T-cell (primary cell): ENCODE measurements at regions of chr1 and their contacts with region 1.

Region 1: GRCh38 chr1:101288491-101288944 is 51.7 kb downstream of the S1PR1 start:
- DNase-seq: peak in 34 of 35 experiments; percentile 29 to 90 (median 62)
- ATAC-seq: peak; percentile 62 to 68 (median 64)
- H3K4me3 ChIP-seq: no peak overlapping the region
- H3K4me3 Mint-ChIP-seq: peak overlapping the region in 2 of 3 donors; percentile 4 to 24
- H3K27ac ChIP-seq: peak overlapping the region; percentile 35
- H3K27ac Mint-ChIP-seq: peak overlapping the region; percentile 79 to 85
- H3K4me1 ChIP-seq: peaks cover 70 to 75% of the 10 kb centered on the region in 2 experiments
- H3K4me1 Mint-ChIP-seq: peaks cover 76 to 89% (median 84%) of the 10 kb centered on the region in 3 donors
- H3K27me3 ChIP-seq: no peaks in the 10 kb centered on the region
- H3K27me3 Mint-ChIP-seq: no peaks in the 10 kb centered on the region

Region 2: GRCh38 chr1:100921109-100921706 is 367.3 kb before region 1 on chr1:
- CTCF ChIA-PET with region 1: interaction called, 14 to 92 read pairs
- POLR2A ChIA-PET with region 1: interaction called, 3 to 5 read pairs
- DNase-seq: peak in 2 of 35 experiments; percentile 17 to 81
- ATAC-seq: no peak
- H3K4me3 ChIP-seq: no peak overlapping the region
- H3K4me3 Mint-ChIP-seq: no peak overlapping the region
- H3K27ac ChIP-seq: no peak overlapping the region
- H3K27ac Mint-ChIP-seq: peak overlapping the region; percentile 81 to 86
- H3K4me1 ChIP-seq: peaks cover 19 to 37% of the 10 kb centered on the region in 2 experiments
- H3K4me1 Mint-ChIP-seq: peaks cover 29 to 38% (median 37%) of the 10 kb centered on the region in 3 donors
- H3K27me3 ChIP-seq: no peaks in the 10 kb centered on the region
- H3K27me3 Mint-ChIP-seq: no peaks in the 10 kb centered on the region

Region 3: DNA sequence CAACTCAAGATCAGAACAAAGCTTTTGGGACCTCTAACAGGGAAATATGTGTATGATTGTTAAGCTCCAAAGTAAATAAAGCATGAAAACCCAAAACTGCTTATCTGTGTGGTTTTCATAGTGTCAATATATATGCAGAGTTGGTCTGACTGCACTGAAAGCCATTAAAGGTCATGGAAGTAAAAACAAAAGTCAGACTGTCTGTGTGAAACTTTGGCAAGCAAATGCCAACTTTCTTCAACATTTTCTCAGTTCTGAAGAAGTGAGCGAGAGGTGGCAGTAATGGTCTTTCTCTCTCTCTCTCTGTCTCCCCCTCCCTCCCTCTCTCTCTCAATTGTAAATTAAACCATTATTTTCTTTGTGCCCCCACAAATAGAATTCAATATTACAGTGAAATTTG is 151.8 kb before region 1 on chr1:
- CTCF ChIA-PET with region 1: interaction called, 12 read pairs
- POLR2A ChIA-PET with region 1: interaction called, 3 to 4 read pairs
- DNase-seq: peak in 7 of 35 experiments; percentile 6 to 72 (median 13)
- ATAC-seq: peak; percentile 69 to 83 (median 74)
- H3K4me3 ChIP-seq: no peak overlapping the region
- H3K4me3 Mint-ChIP-seq: peak overlapping the region in 2 of 3 donors; percentile 44 to 47
- H3K27ac ChIP-seq: peak overlapping the region; percentile 43
- H3K27ac Mint-ChIP-seq: peak overlapping the region; percentile 87 to 88
- H3K4me1 ChIP-seq: peaks cover 16 to 38% of the 10 kb centered on the region in 2 experiments
- H3K4me1 Mint-ChIP-seq: peaks cover 59 to 66% (median 64%) of the 10 kb centered on the region in 3 donors
- H3K27me3 ChIP-seq: no peaks in the 10 kb centered on the region
- H3K27me3 Mint-ChIP-seq: no peaks in the 10 kb centered on the region

Region 4: GRCh38 chr1:101190441-101190840 is 98.1 kb before region 1 on chr1:
- CTCF ChIA-PET with region 1: no interaction called
- POLR2A ChIA-PET with region 1: no interaction called
- DNase-seq: no peak
- ATAC-seq: no peak
- H3K4me3 ChIP-seq: no peak overlapping the region
- H3K4me3 Mint-ChIP-seq: no peak overlapping the region
- H3K27ac ChIP-seq: no peak overlapping the region
- H3K27ac Mint-ChIP-seq: no peak overlapping the region
- H3K4me1 ChIP-seq: peaks cover 0 to 2% of the 10 kb centered on the region in 2 experiments
- H3K4me1 Mint-ChIP-seq: peaks cover 10 to 14% (median 11%) of the 10 kb centered on the region in 3 donors
- H3K27me3 ChIP-seq: no peaks in the 10 kb centered on the region
- H3K27me3 Mint-ChIP-seq: no peaks in the 10 kb centered on the region

Region 5: DNA sequence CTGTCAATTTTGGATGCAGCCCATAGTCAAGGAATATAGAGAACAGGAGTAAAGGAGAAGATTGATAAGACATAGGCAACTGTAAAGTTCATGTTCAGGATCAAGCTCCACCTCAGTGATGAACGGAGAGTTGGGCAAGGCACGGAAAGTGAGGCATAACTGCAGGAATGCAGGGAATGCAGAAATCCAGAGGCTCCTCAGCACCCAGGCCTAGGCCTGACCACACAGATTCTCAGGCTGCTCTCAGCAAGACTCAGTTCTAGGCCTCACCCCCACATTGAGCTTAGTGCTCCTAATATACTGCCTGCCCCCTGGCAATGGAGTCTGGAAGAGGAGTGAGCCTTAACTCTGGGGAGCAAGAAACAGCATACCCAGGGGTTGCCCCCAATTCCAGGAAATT is 88.0 kb before region 1 on chr1:
- CTCF ChIA-PET with region 1: no interaction called
- POLR2A ChIA-PET with region 1: no interaction called
- DNase-seq: no peak
- ATAC-seq: no peak
- H3K4me3 ChIP-seq: no peak overlapping the region
- H3K4me3 Mint-ChIP-seq: no peak overlapping the region
- H3K27ac ChIP-seq: no peak overlapping the region
- H3K27ac Mint-ChIP-seq: no peak overlapping the region
- H3K4me1 ChIP-seq: no peaks in the 10 kb centered on the region
- H3K4me1 Mint-ChIP-seq: peaks cover 0 to 5% (median 3%) of the 10 kb centered on the region in 3 donors
- H3K27me3 ChIP-seq: no peaks in the 10 kb centered on the region
- H3K27me3 Mint-ChIP-seq: no peaks in the 10 kb centered on the region

Region 6: DNA sequence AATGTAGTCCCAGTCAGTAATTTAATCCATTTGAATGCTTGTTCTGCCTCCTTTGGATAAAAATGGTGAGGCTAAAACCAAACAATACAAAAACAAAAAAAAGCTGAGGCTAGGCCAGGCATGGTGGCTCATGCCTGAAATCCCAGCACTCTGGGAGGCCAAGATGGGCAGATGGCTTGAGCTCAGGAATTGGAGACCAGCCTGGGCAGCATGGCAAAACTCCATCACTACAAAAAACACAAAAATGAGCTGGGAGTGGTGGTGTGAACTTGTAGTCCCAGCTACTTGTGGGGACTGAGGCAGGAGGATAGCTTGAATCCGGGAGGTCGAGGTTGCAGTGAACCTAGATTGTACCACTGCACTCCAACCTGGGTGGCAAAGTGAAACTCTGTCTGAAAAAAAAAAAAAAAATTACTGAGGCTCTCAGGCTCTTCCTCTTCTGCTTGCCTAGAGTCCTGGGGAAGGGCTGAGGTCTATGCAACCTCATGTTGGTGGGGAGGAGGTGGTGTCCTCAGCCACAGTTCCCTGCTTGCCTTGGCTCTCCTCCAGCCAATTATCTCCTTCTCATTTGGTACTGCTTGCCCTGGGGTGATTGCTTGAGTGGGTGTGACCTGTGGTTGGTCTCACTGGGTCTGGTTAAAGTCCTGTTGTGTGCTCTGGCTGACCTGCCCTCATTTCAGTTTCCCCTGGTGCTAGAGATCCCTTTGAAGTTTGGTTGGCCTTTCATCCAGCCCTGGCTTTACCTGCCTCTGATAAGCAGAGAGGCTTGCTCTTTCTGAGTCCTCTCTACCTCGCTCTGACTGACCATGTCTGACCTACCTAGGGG is 30.8 kb before region 1 on chr1:
- CTCF ChIA-PET with region 1: interaction called, 3 to 8 read pairs
- POLR2A ChIA-PET with region 1: interaction called, 5 to 10 read pairs
- DNase-seq: peak in 25 of 35 experiments; percentile 12 to 65 (median 38)
- ATAC-seq: peak; percentile 69 to 74 (median 72)
- H3K4me3 ChIP-seq: no peak overlapping the region
- H3K4me3 Mint-ChIP-seq: peak overlapping the region in 2 of 3 donors; percentile 17 to 38
- H3K27ac ChIP-seq: peak overlapping the region; percentile 58
- H3K27ac Mint-ChIP-seq: peak overlapping the region; percentile 79 to 93
- H3K4me1 ChIP-seq: peaks cover 32 to 43% of the 10 kb centered on the region in 2 experiments
- H3K4me1 Mint-ChIP-seq: peaks cover 58 to 68% (median 63%) of the 10 kb centered on the region in 3 donors
- H3K27me3 ChIP-seq: no peaks in the 10 kb centered on the region
- H3K27me3 Mint-ChIP-seq: no peaks in the 10 kb centered on the region

Region 7: DNA sequence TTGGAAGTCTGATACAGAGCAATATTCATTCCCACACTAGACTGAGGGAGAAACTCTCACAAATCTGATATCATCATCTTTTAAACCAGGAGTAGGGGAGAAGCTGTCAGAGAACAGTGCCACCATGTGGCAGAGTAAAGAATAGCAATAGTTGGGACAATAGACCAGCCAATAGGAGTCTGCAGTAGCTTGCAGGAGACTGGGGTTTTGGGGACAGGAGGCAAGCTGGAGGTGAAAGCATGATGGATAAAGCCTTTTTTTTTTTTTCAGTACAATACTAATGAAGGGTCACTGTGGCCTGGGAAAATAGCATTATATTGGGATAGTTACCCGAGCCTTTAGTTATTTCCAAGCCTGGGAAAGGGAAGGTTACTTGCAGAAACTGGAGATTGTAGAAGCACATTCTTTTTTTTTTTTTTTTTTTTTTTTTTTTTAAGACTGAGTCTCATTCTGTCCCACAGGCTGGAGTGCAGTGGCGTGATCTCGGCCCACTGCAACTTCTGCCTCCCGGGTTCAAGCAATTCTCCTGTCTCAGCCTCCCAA is 69.0 kb after region 1 on chr1:
- CTCF ChIA-PET with region 1: interaction called, 5 to 16 read pairs
- POLR2A ChIA-PET with region 1: no interaction called
- DNase-seq: peak; percentile 17 to 93 (median 61)
- ATAC-seq: peak; percentile 98 to 100 (median 99)
- H3K4me3 ChIP-seq: no peak overlapping the region
- H3K4me3 Mint-ChIP-seq: peak overlapping the region in 2 of 3 donors; percentile 42 to 53
- H3K27ac ChIP-seq: no peak overlapping the region
- H3K27ac Mint-ChIP-seq: peak overlapping the region; percentile 5 to 85
- H3K4me1 ChIP-seq: peaks cover 4 to 6% of the 10 kb centered on the region in 2 experiments
- H3K4me1 Mint-ChIP-seq: peaks cover 8 to 13% (median 10%) of the 10 kb centered on the region in 3 donors
- H3K27me3 ChIP-seq: no peaks in the 10 kb centered on the region
- H3K27me3 Mint-ChIP-seq: no peaks in the 10 kb centered on the region

Region 8: GRCh38 chr1:103197216-103197615 is 1908.7 kb after region 1 on chr1:
- CTCF ChIA-PET with region 1: no interaction called
- POLR2A ChIA-PET with region 1: no interaction called
- DNase-seq: no peak
- ATAC-seq: no peak
- H3K4me3 ChIP-seq: no peak overlapping the region
- H3K4me3 Mint-ChIP-seq: no peak overlapping the region
- H3K27ac ChIP-seq: no peak overlapping the region
- H3K27ac Mint-ChIP-seq: no peak overlapping the region
- H3K4me1 ChIP-seq: no peaks in the 10 kb centered on the region
- H3K4me1 Mint-ChIP-seq: no peaks in the 10 kb centered on the region
- H3K27me3 ChIP-seq: no peaks in the 10 kb centered on the region
- H3K27me3 Mint-ChIP-seq: no peaks in the 10 kb centered on the region